Ovary (tissue), 10 donors: ENCODE measurements at regions of chr4 and their contacts with region 1.

Region 1: DNA sequence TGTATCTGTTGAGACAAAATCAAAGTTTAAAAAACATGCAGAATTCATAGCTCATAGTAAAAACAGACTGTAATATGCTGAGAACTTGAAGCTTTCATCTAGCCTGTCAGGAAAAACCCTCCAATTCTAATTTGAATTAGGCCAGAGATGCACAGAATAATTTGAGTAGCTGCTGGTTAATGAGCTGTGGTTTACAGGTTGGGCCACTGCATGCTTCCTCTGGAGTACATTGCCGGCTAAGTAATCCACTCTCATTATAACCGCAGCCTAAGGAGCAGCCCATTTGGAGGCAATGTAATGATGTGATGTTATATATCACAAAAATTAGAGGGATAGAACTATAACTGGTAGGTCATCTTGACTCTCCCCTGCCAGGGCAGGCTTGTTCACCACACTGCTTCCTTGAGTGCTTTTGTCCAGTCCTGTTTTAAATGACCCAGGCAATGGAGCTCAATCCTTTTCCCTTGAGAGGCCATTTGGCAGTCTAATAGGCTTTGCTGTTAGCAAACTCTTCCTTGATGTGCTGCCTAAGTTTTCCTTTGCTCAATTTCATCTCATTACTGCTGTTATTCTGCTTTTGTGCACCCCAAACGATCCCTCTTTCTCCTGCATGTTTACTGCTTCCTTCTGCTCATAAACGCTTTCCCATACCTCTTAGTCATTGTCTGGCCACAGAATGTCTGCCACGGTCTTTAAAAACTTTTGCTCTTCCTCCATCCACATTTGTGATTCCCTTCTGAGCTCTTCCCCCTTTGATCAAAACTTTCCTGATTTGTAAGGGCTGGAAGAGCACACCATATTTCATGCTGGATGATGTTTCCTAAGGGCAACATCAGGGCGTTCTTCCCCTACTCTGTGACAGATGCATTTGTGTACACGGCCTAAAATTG is 230.9 kb downstream of the C4orf33 start:
- DNase-seq: no peak
- H3K4me3 ChIP-seq: no peak overlapping the region
- H3K27ac ChIP-seq: no peak overlapping the region
- H3K4me1 ChIP-seq: no peaks in the 10 kb centered on the region
- H3K27me3 ChIP-seq: no peaks in the 10 kb centered on the region
- CTCF ChIP-seq: no peak
- EP300 ChIP-seq: no peak
- POLR2A ChIP-seq: no peak

Region 2: DNA sequence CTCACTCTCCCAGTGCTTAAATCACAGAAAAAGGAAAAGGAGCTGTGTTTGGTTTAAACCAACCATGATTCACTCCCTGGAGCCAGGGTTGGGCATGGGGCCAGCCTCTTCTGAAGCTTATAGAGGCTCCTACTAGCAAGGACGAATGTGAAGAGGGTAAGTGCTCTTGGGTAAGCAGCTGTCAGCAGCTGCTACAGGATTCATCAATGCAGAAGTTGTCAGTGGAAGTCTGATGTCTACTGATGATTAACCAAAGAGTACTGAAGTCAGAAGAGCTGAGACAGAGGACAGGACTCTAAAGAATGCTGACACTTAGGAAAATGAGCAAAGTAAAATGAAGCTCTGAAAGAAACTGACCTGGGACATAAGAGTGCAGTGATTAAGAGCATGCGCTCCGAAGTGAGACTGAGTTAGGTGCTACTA is 550.0 kb before region 1 on chr4:
- intact Hi-C with region 1: loop called in 1 of 4 experiments (anchors 10 kb)
- DNase-seq: peak; percentile 29 to 60 (median 50)
- H3K4me3 ChIP-seq: no peak overlapping the region
- H3K27ac ChIP-seq: no peak overlapping the region
- H3K4me1 ChIP-seq: no peaks in the 10 kb centered on the region
- H3K27me3 ChIP-seq: no peaks in the 10 kb centered on the region
- CTCF ChIP-seq: no peak
- EP300 ChIP-seq: no peak
- POLR2A ChIP-seq: no peak